Right cardiac atrium (tissue), 5 donors: ENCODE measurements at regions of chr15 and their contacts with region 1.

Region 1: DNA sequence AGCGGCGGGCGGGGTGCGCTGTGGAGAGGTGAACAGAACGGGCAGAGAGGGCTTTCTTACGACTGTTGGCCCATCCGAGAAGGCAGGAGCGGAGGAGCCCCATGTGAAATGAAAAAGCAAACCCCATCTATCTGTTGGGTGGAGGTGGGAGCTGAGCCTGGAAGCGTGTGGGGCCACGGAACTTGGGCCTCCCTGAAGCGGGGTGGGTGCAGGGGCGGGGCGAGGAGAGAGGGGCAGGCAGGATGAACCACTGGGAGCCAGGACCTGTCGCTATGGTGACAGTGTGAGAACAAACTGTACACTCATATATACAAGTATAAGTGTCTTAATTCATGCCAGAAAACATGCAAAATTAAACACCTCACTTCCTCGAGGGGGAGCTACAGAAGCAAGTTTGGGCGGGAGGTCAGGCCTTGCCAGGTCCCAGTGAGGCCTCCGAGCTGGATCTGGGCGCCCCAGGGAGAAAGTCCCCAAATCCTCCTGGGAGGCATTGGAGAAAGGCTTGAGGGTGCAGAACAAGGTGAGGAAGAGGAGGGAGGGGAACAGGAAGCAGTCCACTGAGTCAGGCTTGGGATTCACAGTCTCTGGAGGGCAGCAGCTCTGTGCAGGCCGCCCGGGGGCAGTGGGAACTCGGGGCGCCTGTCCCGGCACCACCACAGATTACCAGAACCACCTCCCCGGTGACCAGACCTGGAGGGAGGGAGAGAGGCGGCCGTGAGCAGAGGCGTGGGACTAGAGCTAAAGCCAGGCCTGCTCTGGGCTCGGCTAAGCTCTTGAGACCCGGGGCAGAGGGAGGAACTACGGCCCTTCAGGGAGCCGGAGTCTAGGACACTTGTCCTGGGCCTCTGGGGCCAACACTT is 34.8 kb downstream of the RBPMS2 start:
- DNase-seq: peak; percentile 80 to 93 (median 90)
- ATAC-seq: peak; percentile 86 to 89
- H3K4me3 ChIP-seq: no peak overlapping the region
- H3K27ac ChIP-seq: peak overlapping the region; percentile 32
- H3K4me1 ChIP-seq: peaks cover 3% of the 10 kb centered on the region
- H3K27me3 ChIP-seq: no peaks in the 10 kb centered on the region

Region 2: GRCh38 chr15:64809649-64810496 is 69.3 kb after region 1 on chr15:
- intact Hi-C with region 1: loop called in 2 of 4 experiments (anchors 5 kb)
- DNase-seq: peak; percentile 85 to 93 (median 91)
- ATAC-seq: peak; percentile 81 to 82
- H3K4me3 ChIP-seq: no peak overlapping the region
- H3K27ac ChIP-seq: no peak overlapping the region
- H3K4me1 ChIP-seq: no peaks in the 10 kb centered on the region
- H3K27me3 ChIP-seq: no peaks in the 10 kb centered on the region

Region 3: DNA sequence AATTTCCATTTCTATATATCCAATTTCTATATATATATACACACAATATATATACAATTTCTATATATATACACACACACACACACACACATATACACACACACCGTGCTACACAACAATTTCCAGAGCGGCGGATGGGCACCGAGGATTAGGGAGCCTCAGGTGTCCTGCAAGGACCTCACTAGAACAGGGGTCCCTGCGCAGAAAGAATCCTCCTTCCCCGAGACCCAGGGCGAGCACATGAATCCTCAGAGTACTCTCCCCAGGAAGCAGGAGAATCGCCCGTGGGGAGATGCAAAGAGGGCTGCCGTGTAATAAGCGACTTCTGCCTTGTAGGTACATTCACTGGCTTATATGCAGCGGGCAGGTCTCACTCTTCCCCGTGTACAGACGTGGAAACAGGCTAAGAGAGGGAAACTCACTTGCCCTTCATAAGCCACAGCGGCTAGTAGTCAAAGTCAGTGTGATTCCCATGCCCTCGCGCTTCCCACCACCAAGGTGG is 84.4 kb after region 1 on chr15:
- intact Hi-C with region 1: loop called in 1 of 4 experiments (anchors 5 kb)
- DNase-seq: peak in 1 of 3 donors; percentile 21
- ATAC-seq: no peak
- H3K4me3 ChIP-seq: peak overlapping the region; percentile 30
- H3K27ac ChIP-seq: no peak overlapping the region
- H3K4me1 ChIP-seq: no peaks in the 10 kb centered on the region
- H3K27me3 ChIP-seq: no peaks in the 10 kb centered on the region